GM12878 (cell line): ENCODE measurements at regions of chr16 and their contacts with region 1.

Region 1: GRCh38 chr16:77675464-77676324 is 46.6 kb upstream of the NUDT7 start:
- DNase-seq: peak; percentile 24
- ATAC-seq: peak; percentile 88
- H3K4me3 ChIP-seq: no peak overlapping the region
- H3K27ac ChIP-seq: no peak overlapping the region
- H3K4me1 ChIP-seq: no peaks in the 10 kb centered on the region
- H3K27me3 ChIP-seq: no peaks in the 10 kb centered on the region
- CTCF ChIP-seq: peak; percentile 86 to 93 (median 89)
- EP300 ChIP-seq: no peak
- POLR2A ChIP-seq: no peak
- RAD21 ChIP-seq: peak; percentile 99

Region 2: DNA sequence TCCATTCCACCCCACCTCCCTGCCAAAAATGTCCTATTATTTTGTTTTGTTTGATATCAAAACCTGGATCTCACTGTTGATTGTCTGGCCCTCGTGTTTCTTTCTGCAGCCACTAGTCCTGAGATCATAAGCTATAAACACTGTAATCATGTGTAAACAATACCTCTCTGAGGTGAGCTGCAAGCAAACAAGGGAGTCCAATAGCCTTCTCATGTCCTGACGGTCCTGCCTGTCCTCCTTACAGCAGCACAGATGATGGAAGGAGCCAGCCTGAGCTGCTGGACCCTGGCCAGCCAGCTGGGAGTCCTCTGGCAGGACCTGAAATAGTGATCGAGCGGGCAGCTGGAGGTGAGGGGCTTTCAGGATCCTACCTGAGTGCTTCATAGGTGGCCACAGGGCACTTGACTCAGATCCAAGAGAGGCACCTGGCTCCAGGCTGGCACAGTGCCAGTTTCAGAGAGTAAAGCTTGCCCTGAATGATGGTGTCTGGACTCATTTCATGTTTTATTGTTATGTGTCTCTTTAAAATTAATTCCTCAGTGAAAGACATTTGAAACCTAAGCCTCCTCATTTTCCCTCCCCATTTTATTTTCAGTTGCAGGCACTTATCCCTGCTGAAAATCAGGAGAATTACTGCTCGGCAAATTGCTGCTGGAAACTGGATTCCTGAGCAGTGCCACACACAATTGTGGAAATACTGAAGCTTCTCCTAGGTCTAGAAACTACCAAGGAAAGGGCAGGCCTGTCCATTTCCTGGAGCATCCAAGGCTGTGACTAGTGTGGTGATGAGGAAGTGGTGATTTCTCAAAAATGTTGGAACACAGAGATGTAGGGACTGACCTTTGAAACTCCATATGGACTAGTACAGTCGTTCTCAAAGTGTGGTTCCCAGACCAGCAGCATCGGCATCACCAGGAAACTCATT is 224.9 kb before region 1 on chr16:
- CTCF ChIA-PET with region 1: no interaction called
- POLR2A ChIA-PET with region 1: no interaction called
- RAD21 ChIA-PET with region 1: no interaction called
- SMC1A ChIA-PET with region 1: no interaction called
- in situ Hi-C with region 1: no loop called
- intact Hi-C with region 1: no loop called
- DNase-seq: no peak
- ATAC-seq: no peak
- H3K4me3 ChIP-seq: no peak overlapping the region
- H3K27ac ChIP-seq: no peak overlapping the region
- H3K4me1 ChIP-seq: no peaks in the 10 kb centered on the region
- H3K27me3 ChIP-seq: no peaks in the 10 kb centered on the region
- CTCF ChIP-seq: no peak
- EP300 ChIP-seq: no peak
- POLR2A ChIP-seq: no peak
- RAD21 ChIP-seq: no peak

Region 3: DNA sequence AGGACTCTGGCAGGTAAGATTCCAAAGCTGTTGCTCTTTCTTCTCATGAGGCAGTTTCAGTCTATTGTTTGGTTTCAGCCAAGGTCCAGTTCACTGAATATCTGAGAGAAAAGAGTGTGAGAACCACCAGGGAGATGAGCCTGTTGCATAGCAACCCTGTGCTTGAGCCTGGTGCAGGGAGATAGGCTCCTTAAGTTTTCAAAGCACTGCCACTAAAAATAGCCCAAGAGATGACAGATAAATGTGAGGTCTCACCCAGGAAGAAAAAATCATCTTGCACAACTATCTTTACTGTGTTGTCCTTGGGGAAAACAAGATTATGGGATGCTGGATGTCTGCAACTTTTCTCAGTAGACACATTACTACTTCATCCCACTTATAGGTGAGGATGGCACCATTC is 20.5 kb after region 1 on chr16:
- CTCF ChIA-PET with region 1: no interaction called
- POLR2A ChIA-PET with region 1: no interaction called
- RAD21 ChIA-PET with region 1: no interaction called
- SMC1A ChIA-PET with region 1: no interaction called
- in situ Hi-C with region 1: no loop called
- intact Hi-C with region 1: no loop called
- DNase-seq: no peak
- ATAC-seq: no peak
- H3K4me3 ChIP-seq: no peak overlapping the region
- H3K27ac ChIP-seq: no peak overlapping the region
- H3K4me1 ChIP-seq: no peaks in the 10 kb centered on the region
- H3K27me3 ChIP-seq: no peaks in the 10 kb centered on the region; a peak in 2 of 4 replicates
- CTCF ChIP-seq: no peak
- EP300 ChIP-seq: no peak
- POLR2A ChIP-seq: no peak
- RAD21 ChIP-seq: no peak

Region 4: GRCh38 chr16:77782694-77783093 is 107.0 kb after region 1 on chr16:
- CTCF ChIA-PET with region 1: no interaction called
- POLR2A ChIA-PET with region 1: no interaction called
- RAD21 ChIA-PET with region 1: no interaction called
- SMC1A ChIA-PET with region 1: no interaction called
- in situ Hi-C with region 1: no loop called
- intact Hi-C with region 1: loop called (anchors 5 kb)
- DNase-seq: no peak
- ATAC-seq: peak; percentile 38; the same call in 1 of the 3 replicates
- H3K4me3 ChIP-seq: no peak overlapping the region
- H3K27ac ChIP-seq: no peak overlapping the region
- H3K4me1 ChIP-seq: no peaks in the 10 kb centered on the region
- H3K27me3 ChIP-seq: peaks cover 0 to under 1% of the 10 kb centered on the region in 2 experiments; a peak in 3 of 4 replicates
- CTCF ChIP-seq: peak; percentile 10 to 19 (median 12); a peak in 2 of 6 replicates
- EP300 ChIP-seq: no peak
- POLR2A ChIP-seq: no peak
- RAD21 ChIP-seq: peak; percentile 20; the same call in 1 of the 2 replicates

Region 5: DNA sequence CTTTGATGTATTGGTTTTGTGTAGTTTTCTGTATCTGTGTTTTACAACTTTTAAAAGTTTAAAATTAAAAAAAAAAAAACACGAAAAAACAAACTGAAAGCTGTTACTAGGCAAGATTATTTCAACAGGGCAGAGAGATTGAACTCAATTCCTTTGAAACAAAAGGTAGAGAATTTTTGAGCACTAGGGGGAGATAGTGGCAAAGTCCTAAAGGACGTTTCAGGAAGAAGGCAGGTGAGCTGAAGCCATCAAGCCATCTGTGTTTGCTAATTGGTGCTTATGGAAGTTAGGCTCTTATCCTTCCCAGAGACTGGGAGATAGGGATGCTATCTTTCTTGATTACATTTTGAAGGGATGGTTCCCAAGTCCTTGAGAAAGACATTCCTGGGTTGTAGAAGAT is 276.1 kb after region 1 on chr16:
- CTCF ChIA-PET with region 1: interaction called, 3 read pairs
- POLR2A ChIA-PET with region 1: no interaction called
- RAD21 ChIA-PET with region 1: no interaction called
- SMC1A ChIA-PET with region 1: interaction called, 3 read pairs
- in situ Hi-C with region 1: no loop called
- intact Hi-C with region 1: loop called (anchors 5 kb)
- DNase-seq: peak; percentile 21
- ATAC-seq: peak; percentile 73
- H3K4me3 ChIP-seq: no peak overlapping the region
- H3K27ac ChIP-seq: no peak overlapping the region
- H3K4me1 ChIP-seq: peaks cover 20% of the 10 kb centered on the region
- H3K27me3 ChIP-seq: no peaks in the 10 kb centered on the region
- CTCF ChIP-seq: peak; percentile 55 to 57 (median 56); a peak in 4 of 6 replicates
- EP300 ChIP-seq: no peak
- POLR2A ChIP-seq: no peak
- RAD21 ChIP-seq: peak; percentile 78

Region 6: GRCh38 chr16:77971306-77972271 is 295.9 kb after region 1 on chr16:
- CTCF ChIA-PET with region 1: interaction called, 12 read pairs
- POLR2A ChIA-PET with region 1: no interaction called
- RAD21 ChIA-PET with region 1: interaction called, 4 read pairs
- SMC1A ChIA-PET with region 1: interaction called, 5 read pairs
- in situ Hi-C with region 1: loop called (anchors 5 kb)
- intact Hi-C with region 1: loop called (anchors 1 kb)
- DNase-seq: no peak
- ATAC-seq: peak; percentile 95
- H3K4me3 ChIP-seq: no peak overlapping the region
- H3K27ac ChIP-seq: no peak overlapping the region
- H3K4me1 ChIP-seq: no peaks in the 10 kb centered on the region
- H3K27me3 ChIP-seq: no peaks in the 10 kb centered on the region
- CTCF ChIP-seq: peak; percentile 68 to 90 (median 76)
- EP300 ChIP-seq: no peak
- POLR2A ChIP-seq: no peak
- RAD21 ChIP-seq: peak; percentile 96

Region 7: DNA sequence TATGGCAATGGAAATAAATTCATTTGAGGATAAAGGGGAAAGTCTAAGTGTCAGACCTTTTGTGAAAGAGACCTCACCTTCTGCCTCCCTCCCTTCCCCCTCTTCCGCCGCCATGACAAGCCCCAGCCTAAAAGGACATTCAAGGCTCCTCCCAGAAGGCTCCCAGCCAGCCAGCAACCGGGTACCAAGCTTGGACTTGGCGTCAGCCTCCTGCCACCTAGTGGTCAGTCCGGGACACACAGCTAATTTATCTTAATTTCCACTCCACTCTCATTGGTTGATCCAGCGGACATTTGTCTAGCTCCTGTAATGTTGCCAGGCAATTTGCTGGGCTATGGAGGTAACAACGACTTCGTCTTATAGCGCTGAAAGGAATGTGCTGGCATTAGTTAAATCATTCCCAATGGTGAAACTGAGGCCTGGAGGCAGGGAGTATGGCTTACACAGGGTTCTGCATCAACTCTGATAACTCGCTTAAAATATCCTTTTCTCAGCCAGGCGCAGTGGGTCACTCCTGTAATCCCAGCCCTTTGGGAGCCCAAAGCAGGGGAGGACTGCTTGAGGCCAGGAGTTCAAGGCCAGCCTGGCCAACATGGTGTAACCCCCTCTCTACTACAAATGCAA is 327.3 kb after region 1 on chr16:
- CTCF ChIA-PET with region 1: interaction called, 41 read pairs
- POLR2A ChIA-PET with region 1: no interaction called
- RAD21 ChIA-PET with region 1: interaction called, 5 read pairs
- SMC1A ChIA-PET with region 1: interaction called, 5 read pairs
- in situ Hi-C with region 1: loop called (anchors 5 kb)
- intact Hi-C with region 1: loop called (anchors 1 kb)
- DNase-seq: peak; percentile 51
- ATAC-seq: peak; percentile 97
- H3K4me3 ChIP-seq: no peak overlapping the region
- H3K27ac ChIP-seq: no peak overlapping the region
- H3K4me1 ChIP-seq: no peaks in the 10 kb centered on the region
- H3K27me3 ChIP-seq: no peaks in the 10 kb centered on the region
- CTCF ChIP-seq: peak; percentile 85 to 97 (median 90)
- EP300 ChIP-seq: no peak
- POLR2A ChIP-seq: no peak
- RAD21 ChIP-seq: peak; percentile 84

Region 8: GRCh38 chr16:78099372-78100161 is 423.9 kb after region 1 on chr16 and contains the start of gene WWOX:
- CTCF ChIA-PET with region 1: no interaction called
- POLR2A ChIA-PET with region 1: no interaction called
- RAD21 ChIA-PET with region 1: interaction called, 3 read pairs
- SMC1A ChIA-PET with region 1: interaction called, 3 read pairs
- in situ Hi-C with region 1: no loop called
- intact Hi-C with region 1: loop called (anchors 1 kb)
- DNase-seq: peak; percentile 88
- ATAC-seq: peak; percentile 95
- H3K4me3 ChIP-seq: peak within 1 kb of the TSS; percentile 81
- H3K27ac ChIP-seq: peak within 1 kb of the TSS; percentile 63
- H3K4me1 ChIP-seq: peaks cover 10% of the 10 kb centered on the region; the same call in 1 of the 2 replicates
- H3K27me3 ChIP-seq: no peaks in the 10 kb centered on the region
- CTCF ChIP-seq: peak; percentile 73 to 95 (median 83)
- EP300 ChIP-seq: no peak
- POLR2A ChIP-seq: peak; percentile 90
- RAD21 ChIP-seq: peak; percentile 41; the same call in 1 of the 2 replicates
- polyA plus RNA-seq, gene WWOX: 2.8 to 4.6 TPM

Region 9: GRCh38 chr16:78235168-78235800 is 559.6 kb after region 1 on chr16:
- CTCF ChIA-PET with region 1: no interaction called
- POLR2A ChIA-PET with region 1: no interaction called
- RAD21 ChIA-PET with region 1: no interaction called
- SMC1A ChIA-PET with region 1: no interaction called
- in situ Hi-C with region 1: no loop called
- intact Hi-C with region 1: loop called (anchors 10 kb)
- DNase-seq: peak; percentile 7
- ATAC-seq: peak; percentile 97
- H3K4me3 ChIP-seq: no peak overlapping the region
- H3K27ac ChIP-seq: no peak overlapping the region
- H3K4me1 ChIP-seq: no peaks in the 10 kb centered on the region
- H3K27me3 ChIP-seq: no peaks in the 10 kb centered on the region
- CTCF ChIP-seq: peak; percentile 79 to 96 (median 93)
- EP300 ChIP-seq: no peak
- POLR2A ChIP-seq: no peak
- RAD21 ChIP-seq: peak; percentile 66